GM23248 (cell line): ENCODE measurements at regions of chr1 and their contacts with region 1.

Region 1: DNA sequence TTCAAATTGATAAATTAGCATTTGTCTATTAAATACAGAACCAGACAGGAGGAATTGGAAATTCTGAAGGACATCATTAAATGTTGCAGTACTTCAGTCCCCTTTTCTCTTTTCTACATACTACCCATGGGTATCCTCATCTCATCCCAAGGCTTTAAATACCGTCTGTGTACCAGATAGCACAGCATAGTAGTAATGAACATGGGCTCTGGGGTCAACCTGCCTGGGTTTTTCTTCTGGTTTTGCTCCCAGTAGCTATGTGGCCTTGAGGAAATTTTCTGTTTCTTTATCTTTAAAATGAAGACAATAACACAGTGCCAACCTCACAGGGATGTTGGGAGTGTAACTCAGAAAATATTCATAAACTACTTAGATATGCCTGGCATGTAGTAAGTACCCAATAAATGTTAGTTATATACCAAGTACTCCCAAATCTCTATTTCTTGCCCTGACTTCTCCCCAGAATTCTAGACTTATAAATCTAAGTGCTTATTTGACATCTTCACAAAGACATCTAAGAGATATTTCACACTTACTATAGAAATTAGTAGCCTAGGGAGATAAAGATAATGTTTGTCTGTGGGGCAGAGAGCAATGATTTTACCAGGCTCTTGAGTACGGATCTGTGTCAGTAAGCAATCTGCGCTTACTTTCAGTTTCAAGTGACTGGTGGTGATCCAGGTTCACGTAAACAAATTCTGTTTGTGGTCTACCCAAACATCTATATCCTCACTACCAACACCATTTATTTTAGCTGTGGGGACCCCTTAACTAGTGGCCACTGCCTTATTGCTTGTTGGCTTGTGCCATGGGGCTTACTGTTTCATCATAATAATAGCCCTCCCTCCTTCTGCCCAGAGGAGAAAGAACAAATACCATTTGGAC is 37.3 kb downstream of the VANGL2 start:
- DNase-seq: no peak
- H3K4me3 ChIP-seq: no peak overlapping the region
- H3K27ac ChIP-seq: no peak overlapping the region
- H3K4me1 ChIP-seq: no peaks in the 10 kb centered on the region
- H3K27me3 ChIP-seq: peaks cover 15% of the 10 kb centered on the region

Region 2: GRCh38 chr1:160607011-160607671 is 169.5 kb after region 1 on chr1:
- in situ Hi-C with region 1: loop called (anchors 10 kb)
- DNase-seq: peak; percentile 85
- H3K4me3 ChIP-seq: no peak overlapping the region
- H3K27ac ChIP-seq: no peak overlapping the region
- H3K4me1 ChIP-seq: no peaks in the 10 kb centered on the region
- H3K27me3 ChIP-seq: 0 out of 2 replicates have a peak, but pooled peaks cover 24% of the 10 kb centered on the region

Region 3: DNA sequence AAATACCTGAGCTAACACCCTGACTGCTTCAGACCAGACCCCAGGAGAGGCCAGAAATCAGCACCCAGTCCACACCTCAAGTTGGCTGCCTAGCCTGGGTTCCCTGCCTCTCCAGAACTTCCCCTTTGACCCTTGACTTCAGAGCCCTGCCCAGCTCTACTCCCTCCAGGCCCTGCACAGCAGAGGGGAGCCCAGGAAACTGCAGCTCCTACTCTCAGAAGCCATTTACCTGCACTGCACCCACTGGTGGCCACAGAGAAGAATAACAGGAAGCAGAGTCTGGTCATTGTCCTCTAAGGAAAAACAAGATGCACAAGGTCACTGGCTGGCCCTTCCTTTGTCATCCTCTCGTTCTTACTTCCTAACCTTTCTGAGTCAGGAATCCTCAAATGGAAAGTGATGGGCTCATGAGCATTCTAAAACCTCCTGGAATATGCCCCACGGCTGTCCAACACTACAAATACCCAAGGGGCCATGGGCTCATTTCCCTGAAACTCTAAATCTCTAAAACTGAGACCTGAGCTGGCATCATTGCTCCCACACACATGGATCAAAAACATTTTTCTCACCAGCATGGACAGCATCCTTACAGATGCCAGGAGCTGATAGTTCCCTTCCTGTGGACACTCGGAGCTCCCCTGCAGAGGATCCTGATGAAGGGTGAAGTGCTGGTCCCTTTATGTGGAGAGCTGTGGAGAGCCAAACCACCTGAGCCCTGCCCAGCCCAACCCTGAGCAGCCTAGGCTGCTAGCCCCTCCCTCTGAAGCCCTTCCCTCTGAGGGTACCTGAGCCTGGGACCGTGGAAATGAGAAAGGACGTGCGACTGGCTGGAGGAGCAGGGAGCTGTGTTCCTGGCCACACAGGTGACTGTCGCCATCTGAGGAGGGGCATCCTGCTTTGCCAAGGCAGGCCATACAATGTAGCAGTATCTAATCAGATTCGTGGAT is 516.8 kb after region 1 on chr1 and contains the start of gene ITLN2:
- in situ Hi-C with region 1: no loop called
- DNase-seq: peak; percentile 54
- H3K4me3 ChIP-seq: no peak within 1 kb of the TSS
- H3K27ac ChIP-seq: no peak within 1 kb of the TSS
- H3K4me1 ChIP-seq: no peaks in the 10 kb centered on the region
- H3K27me3 ChIP-seq: peaks cover 9% of the 10 kb centered on the region
- total RNA-seq, gene ITLN2: not detected in 2 replicates